ENCODE measurements at regions of chr10 and their contacts with region 1.

Region 1: GRCh38 chr10:117320050-117320665 is 55.1 kb downstream of the PDZD8 start:
- DNase-seq: no peak
- ATAC-seq: peak; percentile 36 to 83 (median 81)
- H3K4me3 ChIP-seq: no peak overlapping the region
- H3K27ac ChIP-seq: no peak overlapping the region
- H3K4me1 ChIP-seq: peaks cover 0 to 4% (median 0%) of the 10 kb centered on the region in 3 donors
- H3K27me3 ChIP-seq: no peaks in the 10 kb centered on the region
- CTCF ChIP-seq: peak in 3 of 4 donors; percentile 30 to 50 (median 41)

Region 2: GRCh38 chr10:116925056-116925455 is 395.1 kb before region 1 on chr10:
- intact Hi-C with region 1: no loop called
- DNase-seq: no peak
- ATAC-seq: no peak
- H3K4me3 ChIP-seq: no peak overlapping the region
- H3K27ac ChIP-seq: no peak overlapping the region
- H3K4me1 ChIP-seq: no peaks in the 10 kb centered on the region
- H3K27me3 ChIP-seq: no peaks in the 10 kb centered on the region
- CTCF ChIP-seq: no peak

Region 3: GRCh38 chr10:117237401-117237991 is 82.7 kb before region 1 on chr10:
- intact Hi-C with region 1: loop called in 1 of 3 experiments (anchors 10 kb)
- DNase-seq: no peak
- ATAC-seq: no peak
- H3K4me3 ChIP-seq: no peak overlapping the region
- H3K27ac ChIP-seq: no peak overlapping the region
- H3K4me1 ChIP-seq: peaks cover 0 to 3% (median 0%) of the 10 kb centered on the region in 3 donors
- H3K27me3 ChIP-seq: peaks cover 0 to 10% (median 0%) of the 10 kb centered on the region in 4 donors
- CTCF ChIP-seq: no peak